Activated CD8-positive, alpha-beta T cell treated with anti-CD3 and anti-CD28 coated beads, Interleukin-2, amount 10 ng/mL, durations not matched to agents 7 days and 5 days (primary cell): ENCODE measurements at regions of chr4 and their contacts with region 1.

Region 1: DNA sequence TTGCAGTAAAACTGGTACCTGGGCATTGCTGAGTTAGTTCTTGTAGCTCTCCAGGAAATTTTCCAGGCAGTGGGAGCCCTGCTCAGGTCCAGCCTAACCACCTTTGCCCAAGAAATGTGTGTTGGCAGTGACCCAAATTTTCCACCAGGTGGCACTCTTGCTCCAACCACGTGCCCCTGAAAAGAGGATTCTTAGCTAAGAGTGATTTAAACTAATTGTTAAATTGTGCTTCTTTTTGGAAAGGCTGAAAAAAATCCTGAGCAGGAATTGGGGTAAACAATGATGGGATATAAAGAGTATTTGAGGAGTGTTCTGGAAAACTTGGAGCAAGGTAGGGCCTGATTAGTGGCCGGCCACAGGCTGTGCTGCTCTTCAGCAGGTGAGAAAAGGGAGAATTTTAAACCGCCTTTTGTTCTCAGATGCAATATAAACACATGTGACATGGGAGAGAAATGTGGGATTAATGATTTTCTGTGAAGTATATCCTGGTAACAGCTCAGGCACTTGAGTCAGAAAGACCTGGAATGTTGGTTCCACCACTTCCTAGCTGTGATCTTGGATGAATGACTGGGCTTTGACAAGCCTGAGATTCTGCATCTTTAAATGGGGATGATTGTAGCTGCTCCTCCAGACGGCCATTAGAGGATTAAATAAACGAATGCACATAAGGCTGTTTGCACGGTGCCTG is 219.6 kb downstream of the PTTG2 start:
- DNase-seq: peak; percentile 78
- ATAC-seq: peak; percentile 52
- H3K4me3 Mint-ChIP-seq: no peak overlapping the region
- H3K27ac Mint-ChIP-seq: peak overlapping the region; percentile 12
- H3K4me1 Mint-ChIP-seq: peaks cover 36% of the 10 kb centered on the region
- H3K27me3 Mint-ChIP-seq: peaks cover 2% of the 10 kb centered on the region

Region 2: GRCh38 chr4:38069271-38069760 is 110.5 kb before region 1 on chr4:
- CTCF ChIA-PET with region 1: interaction called, 34 read pairs
- POLR2A ChIA-PET with region 1: interaction called, 6 read pairs
- DNase-seq: peak; percentile 29
- ATAC-seq: no peak
- H3K4me3 Mint-ChIP-seq: no peak overlapping the region
- H3K27ac Mint-ChIP-seq: peak overlapping the region; percentile 15
- H3K4me1 Mint-ChIP-seq: peaks cover 19% of the 10 kb centered on the region
- H3K27me3 Mint-ChIP-seq: no peaks in the 10 kb centered on the region

Region 3: DNA sequence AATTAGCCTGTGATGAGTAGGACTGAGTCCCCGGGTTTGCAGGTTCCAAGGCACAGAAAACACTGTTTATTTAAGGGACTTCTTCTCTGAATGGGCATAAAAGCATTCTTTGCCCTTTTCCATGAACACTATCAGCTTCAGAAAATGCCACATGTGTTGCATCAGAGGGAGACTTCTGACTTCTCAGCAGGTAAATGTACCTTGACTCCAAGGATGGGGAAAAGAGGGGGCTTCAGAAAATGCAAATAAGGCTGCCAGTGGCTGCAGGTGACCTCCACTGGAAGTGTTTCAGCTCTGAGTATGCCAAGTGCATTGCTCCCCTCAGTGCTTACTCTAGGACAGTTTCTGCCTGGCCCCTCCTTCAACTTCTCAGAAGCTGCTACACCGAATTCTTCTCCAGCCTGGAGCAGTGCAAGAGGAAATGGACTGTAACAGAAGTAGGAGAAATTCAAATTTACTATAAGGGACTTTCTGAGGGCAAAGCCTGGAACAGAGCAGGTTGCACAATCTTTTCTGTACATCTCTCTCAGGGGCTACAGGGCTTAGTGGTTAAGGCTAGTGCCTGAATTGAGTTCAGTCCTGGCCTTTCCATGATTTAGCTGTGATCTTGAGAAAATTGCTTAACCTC is 13.5 kb after region 1 on chr4:
- CTCF ChIA-PET with region 1: interaction called, 21 read pairs
- POLR2A ChIA-PET with region 1: no interaction called
- DNase-seq: no peak
- ATAC-seq: no peak
- H3K4me3 Mint-ChIP-seq: no peak overlapping the region
- H3K27ac Mint-ChIP-seq: no peak overlapping the region
- H3K4me1 Mint-ChIP-seq: no peaks in the 10 kb centered on the region
- H3K27me3 Mint-ChIP-seq: peaks cover 3% of the 10 kb centered on the region

Region 4: DNA sequence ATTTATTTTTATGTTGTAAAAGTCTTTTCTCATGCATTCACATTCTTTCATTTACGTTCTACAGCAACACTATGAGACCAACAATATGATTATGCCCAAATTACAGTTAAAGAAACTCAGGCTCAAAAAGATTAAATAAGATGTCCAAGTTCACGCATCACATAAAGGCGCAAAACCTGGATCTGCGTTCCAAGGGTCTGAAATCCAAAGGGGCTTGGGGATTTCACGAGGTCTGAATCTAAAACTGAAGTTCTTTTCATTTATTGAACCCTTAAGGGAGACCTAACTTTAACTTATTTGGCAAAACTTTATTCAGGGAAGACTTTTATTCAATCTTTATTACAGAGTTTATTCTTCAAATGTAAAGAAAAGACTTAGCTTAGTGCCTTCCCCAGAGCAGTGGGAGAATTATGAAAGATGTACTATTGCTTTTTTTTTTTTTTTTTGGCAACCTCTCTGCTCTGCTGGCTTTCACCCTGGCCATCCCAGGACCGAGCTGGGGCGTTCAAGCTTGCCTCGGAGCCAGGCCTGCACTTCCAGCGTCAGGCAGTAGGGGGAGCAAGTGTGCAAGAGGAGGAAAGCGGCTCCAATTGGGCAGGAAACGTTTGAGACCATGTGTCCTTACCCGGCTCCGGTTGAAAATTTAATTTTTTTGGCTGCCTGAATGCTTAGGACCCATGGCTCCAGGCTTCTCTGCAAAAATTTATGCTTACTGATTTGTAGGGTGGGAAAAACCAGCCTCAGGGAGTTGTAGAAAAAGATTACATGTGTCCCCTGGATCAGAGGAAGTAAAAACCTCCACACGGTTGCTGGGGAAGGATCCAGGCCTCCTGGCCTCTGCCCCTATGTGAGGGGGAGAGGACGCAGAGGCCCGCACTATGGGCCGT is 139.9 kb after region 1 on chr4:
- CTCF ChIA-PET with region 1: interaction called, 59 read pairs
- POLR2A ChIA-PET with region 1: interaction called, 4 read pairs
- DNase-seq: peak; percentile 95
- ATAC-seq: peak; percentile 68
- H3K4me3 Mint-ChIP-seq: peak overlapping the region; percentile 72
- H3K27ac Mint-ChIP-seq: peak overlapping the region; percentile 88
- H3K4me1 Mint-ChIP-seq: peaks cover 33% of the 10 kb centered on the region
- H3K27me3 Mint-ChIP-seq: no peaks in the 10 kb centered on the region

Region 5: DNA sequence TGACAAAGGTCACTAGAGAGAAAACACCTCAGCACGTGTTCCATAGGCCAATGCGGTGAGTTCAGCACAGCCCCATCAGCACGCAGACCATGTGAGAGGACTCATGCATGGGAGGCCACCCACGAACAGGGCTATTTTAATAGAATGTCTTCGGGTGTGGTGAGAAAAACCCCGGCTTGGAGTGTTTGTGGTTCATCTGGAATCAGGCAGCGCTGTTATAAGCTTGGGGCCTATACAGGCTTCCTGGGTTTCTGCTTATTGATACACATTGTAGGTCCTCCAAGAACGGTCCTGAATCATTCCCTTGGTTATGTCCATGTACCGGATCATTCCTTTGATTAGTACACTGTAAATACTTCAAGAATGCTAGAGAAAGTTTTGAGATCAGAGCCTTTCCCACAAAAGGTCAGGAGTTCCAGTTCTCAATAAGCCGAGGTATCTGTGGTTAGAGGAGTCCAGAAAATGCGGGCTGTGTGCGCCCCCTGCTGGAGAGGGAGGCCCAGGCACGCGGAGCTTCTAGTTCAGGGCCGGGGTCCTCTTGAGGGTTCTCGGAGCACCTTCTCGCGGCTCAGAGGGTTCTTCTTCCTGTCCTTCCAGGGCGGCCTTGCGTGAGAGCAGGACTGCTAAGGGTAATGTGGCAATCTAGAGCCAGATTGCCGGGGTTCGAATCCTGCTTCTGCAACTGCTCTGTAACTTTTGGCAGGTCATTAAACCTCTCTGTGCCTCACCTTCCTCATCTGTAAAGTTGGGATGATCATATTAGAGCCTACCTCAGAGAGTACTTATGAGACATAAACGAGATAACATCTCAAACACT is 551.2 kb after region 1 on chr4:
- CTCF ChIA-PET with region 1: interaction called, 27 read pairs
- POLR2A ChIA-PET with region 1: no interaction called
- DNase-seq: peak; percentile 82
- ATAC-seq: peak; percentile 64
- H3K4me3 Mint-ChIP-seq: no peak overlapping the region
- H3K27ac Mint-ChIP-seq: no peak overlapping the region
- H3K4me1 Mint-ChIP-seq: peaks cover 13% of the 10 kb centered on the region
- H3K27me3 Mint-ChIP-seq: peaks cover 10% of the 10 kb centered on the region

Region 6: GRCh38 chr4:38782452-38783108 is 602.7 kb after region 1 on chr4 and contains the start of gene TLR10:
- CTCF ChIA-PET with region 1: interaction called, 34 read pairs
- POLR2A ChIA-PET with region 1: no interaction called
- DNase-seq: peak; percentile 64
- ATAC-seq: peak; percentile 47
- H3K4me3 Mint-ChIP-seq: no peak within 1 kb of the TSS
- H3K27ac Mint-ChIP-seq: no peak within 1 kb of the TSS
- H3K4me1 Mint-ChIP-seq: peaks cover 6% of the 10 kb centered on the region
- H3K27me3 Mint-ChIP-seq: peaks cover 5% of the 10 kb centered on the region
- total RNA-seq, gene TLR10: 0.08 TPM in 1 of 2 experiments, not detected in the other